ENCODE measurements at regions of chr1 and their contacts with region 1.

Region 1: GRCh38 chr1:200620273-200621131 is at the start of gene KIF14:
- DNase-seq: peak; percentile 85
- ATAC-seq: peak; percentile 97
- H3K4me3 ChIP-seq: peak within 1 kb of the TSS; percentile 94
- H3K27ac ChIP-seq: peak within 1 kb of the TSS; percentile 60
- H3K4me1 ChIP-seq: peaks cover 0 to 12% of the 10 kb centered on the region in 2 experiments; a peak in 3 of 4 replicates
- H3K27me3 ChIP-seq: no peaks in the 10 kb centered on the region
- CTCF ChIP-seq: no peak
- POLR2A ChIP-seq: peak; percentile 32
- RAD21 ChIP-seq: no peak
- total RNA-seq, gene KIF14: 21.8 TPM

Region 2: DNA sequence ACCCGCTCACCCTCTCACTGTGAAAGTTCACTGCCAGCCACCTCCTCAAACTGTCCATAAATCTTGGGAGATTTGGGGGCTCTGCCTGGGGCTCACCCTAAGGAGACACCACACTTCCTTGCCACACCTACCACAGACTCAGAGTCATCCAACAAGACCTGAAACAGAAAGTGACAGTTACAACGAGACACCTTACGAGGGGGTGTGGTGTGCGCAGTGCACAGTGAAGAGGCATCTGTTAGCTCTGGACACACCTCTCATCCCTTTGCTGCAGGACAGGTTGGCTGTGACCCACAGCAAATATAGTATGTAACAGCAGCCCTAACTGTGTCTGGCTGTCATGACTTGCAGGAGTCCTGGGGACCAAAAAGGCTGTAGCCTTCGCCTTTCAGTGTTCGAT is 402.8 kb before region 1 on chr1:
- CTCF ChIA-PET with region 1: no interaction called
- POLR2A ChIA-PET with region 1: no interaction called
- RAD21 ChIA-PET with region 1: no interaction called
- intact Hi-C with region 1: no loop called
- DNase-seq: no peak
- ATAC-seq: no peak
- H3K4me3 ChIP-seq: no peak overlapping the region
- H3K27ac ChIP-seq: no peak overlapping the region
- H3K4me1 ChIP-seq: no peaks in the 10 kb centered on the region
- H3K27me3 ChIP-seq: no peaks in the 10 kb centered on the region
- CTCF ChIP-seq: no peak
- POLR2A ChIP-seq: no peak
- RAD21 ChIP-seq: no peak

Region 3: DNA sequence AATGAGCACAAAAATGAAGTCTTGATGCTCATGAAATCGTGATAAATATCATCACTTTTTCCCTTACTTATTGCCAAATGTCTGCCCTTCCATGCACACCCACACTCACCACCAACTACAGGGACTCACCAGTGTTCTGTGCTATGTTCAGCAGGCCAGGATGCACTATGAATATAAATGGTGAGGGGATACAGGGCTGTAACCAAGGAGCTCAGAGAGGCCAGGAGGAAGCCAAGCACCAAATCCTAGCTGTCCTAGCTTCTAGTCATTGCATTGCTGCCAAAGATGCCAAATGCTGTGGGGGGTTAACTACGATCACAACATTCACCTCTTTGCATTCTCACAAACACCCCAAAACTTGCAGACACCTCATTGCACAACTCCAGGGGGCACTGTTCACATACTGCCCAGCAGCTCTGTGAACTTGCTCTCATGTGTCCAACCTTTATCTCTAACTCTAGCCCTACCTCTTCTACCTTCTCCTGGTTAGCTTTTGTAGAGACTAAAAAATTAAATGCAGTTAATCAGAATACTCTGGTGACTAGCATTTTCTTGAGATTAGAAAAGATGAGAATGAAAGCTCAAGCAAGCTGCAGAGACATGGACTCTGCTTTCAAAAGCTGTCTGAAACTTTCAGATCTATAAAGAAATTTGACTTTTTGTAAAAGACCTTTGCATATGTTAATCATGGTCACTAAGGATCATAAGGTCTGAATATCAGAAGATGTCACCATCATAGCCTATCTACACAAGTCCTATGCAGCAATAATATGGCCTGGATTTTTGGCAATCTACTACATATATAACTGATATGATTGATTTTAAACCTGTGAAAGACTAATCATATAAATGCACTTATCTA is 14.0 kb after region 1 on chr1:
- CTCF ChIA-PET with region 1: interaction called, 14 read pairs
- POLR2A ChIA-PET with region 1: no interaction called
- RAD21 ChIA-PET with region 1: interaction called in 1 of 2 experiments, 3 read pairs
- intact Hi-C with region 1: no loop called
- DNase-seq: no peak
- ATAC-seq: no peak; the same call in 1 of the 2 replicates
- H3K4me3 ChIP-seq: no peak overlapping the region
- H3K27ac ChIP-seq: no peak overlapping the region
- H3K4me1 ChIP-seq: peaks cover 4 to 22% of the 10 kb centered on the region in 2 experiments
- H3K27me3 ChIP-seq: no peaks in the 10 kb centered on the region
- CTCF ChIP-seq: peak; percentile 22 to 61 (median 57); a peak in 5 of 6 replicates
- POLR2A ChIP-seq: no peak
- RAD21 ChIP-seq: peak; percentile 43

Region 4: DNA sequence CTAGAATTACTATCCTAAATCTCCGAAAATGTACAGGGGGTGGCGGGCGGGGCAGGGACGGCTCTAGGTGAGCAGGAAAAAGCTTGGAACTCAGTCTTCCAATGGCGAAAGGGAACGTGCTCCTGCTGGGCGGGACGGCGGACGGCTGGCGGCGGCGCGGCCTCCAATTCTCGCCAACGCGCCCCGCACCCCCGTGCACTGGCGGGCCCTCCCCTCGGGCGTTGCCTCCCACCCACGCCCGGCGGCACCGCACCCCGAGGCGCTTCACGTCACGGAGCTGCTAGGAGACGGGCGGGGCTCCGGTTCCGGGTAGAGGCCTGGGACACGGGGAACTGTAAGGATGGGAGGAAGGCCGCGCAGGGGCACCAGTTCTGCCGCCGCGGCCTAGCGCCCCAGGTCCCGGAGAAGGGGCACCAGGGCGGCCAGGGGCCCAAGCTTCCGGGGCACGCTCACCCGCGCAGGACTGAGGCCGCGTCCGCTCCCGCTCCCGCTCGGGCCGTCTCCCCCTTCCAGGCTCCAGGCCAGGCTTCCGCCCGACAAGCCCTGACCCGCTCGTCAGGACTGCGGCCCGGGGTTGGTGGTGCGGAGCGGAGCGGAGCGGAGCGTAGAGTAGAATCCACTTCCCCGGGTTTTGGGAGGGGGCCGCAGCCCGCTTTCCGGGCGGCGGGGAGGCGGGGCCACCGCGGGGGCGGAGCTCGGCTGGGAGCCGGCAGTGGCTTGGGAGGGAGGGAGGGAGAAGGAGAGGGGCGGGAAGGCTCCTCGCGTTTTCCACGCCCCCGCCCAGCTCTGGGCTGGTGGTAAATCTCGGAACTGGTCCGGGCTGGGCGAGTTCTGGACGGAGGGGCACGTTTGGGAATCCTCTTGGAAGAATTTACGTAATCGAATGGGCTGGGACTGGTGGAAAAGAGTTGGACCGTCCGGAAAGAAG is 49.1 kb after region 1 on chr1 and contains the start of gene DDX59:
- CTCF ChIA-PET with region 1: interaction called, 19 read pairs
- POLR2A ChIA-PET with region 1: interaction called, 19 read pairs
- RAD21 ChIA-PET with region 1: interaction called, 4 to 8 read pairs
- intact Hi-C with region 1: loop called (anchors 1 kb)
- DNase-seq: peak; percentile 95
- ATAC-seq: peak; percentile 83
- H3K4me3 ChIP-seq: peak within 1 kb of the TSS; percentile 68 to 79
- H3K27ac ChIP-seq: peak within 1 kb of the TSS; percentile 100
- H3K4me1 ChIP-seq: peaks cover 10 to 23% of the 10 kb centered on the region in 2 experiments
- H3K27me3 ChIP-seq: no peaks in the 10 kb centered on the region
- CTCF ChIP-seq: no peak
- POLR2A ChIP-seq: peak; percentile 61
- RAD21 ChIP-seq: no peak
- total RNA-seq, gene DDX59: 16.0 TPM

Region 5: GRCh38 chr1:200738740-200739498 is 118.4 kb after region 1 on chr1 and contains the start of gene CAMSAP2:
- CTCF ChIA-PET with region 1: no interaction called
- POLR2A ChIA-PET with region 1: no interaction called
- RAD21 ChIA-PET with region 1: no interaction called
- intact Hi-C with region 1: loop called (anchors 5 kb)
- DNase-seq: peak; percentile 34
- ATAC-seq: peak; percentile 81
- H3K4me3 ChIP-seq: peak within 1 kb of the TSS; percentile 82 to 91
- H3K27ac ChIP-seq: peak within 1 kb of the TSS; percentile 96
- H3K4me1 ChIP-seq: peaks cover 12 to 28% of the 10 kb centered on the region in 2 experiments; a peak in 3 of 4 replicates
- H3K27me3 ChIP-seq: no peaks in the 10 kb centered on the region
- CTCF ChIP-seq: no peak
- POLR2A ChIP-seq: peak; percentile 53
- RAD21 ChIP-seq: no peak
- total RNA-seq, gene CAMSAP2: 25.0 TPM

Region 6: DNA sequence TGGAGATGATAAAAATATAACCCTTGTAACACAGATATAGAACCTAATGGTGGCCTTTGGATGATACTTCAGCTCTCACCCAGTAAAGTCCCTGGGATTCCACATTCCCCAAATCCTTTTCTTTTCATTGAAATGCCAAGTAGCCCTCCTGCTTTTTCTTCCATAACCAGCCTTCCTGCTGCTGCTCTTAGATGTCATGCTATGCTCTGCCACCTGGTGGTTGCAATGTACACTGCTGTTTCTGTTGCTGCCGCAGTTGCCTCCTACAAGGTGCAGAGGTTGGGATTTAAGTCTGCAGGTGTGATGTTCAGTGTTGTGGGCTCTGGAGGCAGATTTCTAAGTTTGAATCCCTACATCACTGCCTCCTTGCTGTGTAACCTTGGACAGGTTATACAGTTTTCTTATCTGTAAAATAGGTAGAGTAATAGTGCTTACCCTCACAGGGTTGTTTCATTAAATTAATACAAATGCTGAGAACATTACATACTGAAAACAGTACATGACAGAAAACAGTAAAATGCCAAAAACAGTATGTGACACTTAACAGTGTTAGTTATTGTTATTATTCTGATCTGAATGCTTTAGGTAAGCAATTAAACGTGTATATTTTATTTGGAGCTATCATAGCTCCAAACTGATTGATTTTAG is 182.5 kb after region 1 on chr1:
- CTCF ChIA-PET with region 1: interaction called, 33 read pairs
- POLR2A ChIA-PET with region 1: interaction called, 3 read pairs
- RAD21 ChIA-PET with region 1: interaction called in 1 of 2 experiments, 8 read pairs
- intact Hi-C with region 1: loop called (anchors 1 kb)
- DNase-seq: peak; percentile 80
- ATAC-seq: peak; percentile 99
- H3K4me3 ChIP-seq: no peak overlapping the region
- H3K27ac ChIP-seq: no peak overlapping the region
- H3K4me1 ChIP-seq: peaks cover 0 to 9% of the 10 kb centered on the region in 2 experiments; a peak in 2 of 4 replicates
- H3K27me3 ChIP-seq: no peaks in the 10 kb centered on the region
- CTCF ChIP-seq: peak; percentile 89 to 95 (median 94)
- POLR2A ChIP-seq: no peak
- RAD21 ChIP-seq: peak; percentile 94

Region 7: DNA sequence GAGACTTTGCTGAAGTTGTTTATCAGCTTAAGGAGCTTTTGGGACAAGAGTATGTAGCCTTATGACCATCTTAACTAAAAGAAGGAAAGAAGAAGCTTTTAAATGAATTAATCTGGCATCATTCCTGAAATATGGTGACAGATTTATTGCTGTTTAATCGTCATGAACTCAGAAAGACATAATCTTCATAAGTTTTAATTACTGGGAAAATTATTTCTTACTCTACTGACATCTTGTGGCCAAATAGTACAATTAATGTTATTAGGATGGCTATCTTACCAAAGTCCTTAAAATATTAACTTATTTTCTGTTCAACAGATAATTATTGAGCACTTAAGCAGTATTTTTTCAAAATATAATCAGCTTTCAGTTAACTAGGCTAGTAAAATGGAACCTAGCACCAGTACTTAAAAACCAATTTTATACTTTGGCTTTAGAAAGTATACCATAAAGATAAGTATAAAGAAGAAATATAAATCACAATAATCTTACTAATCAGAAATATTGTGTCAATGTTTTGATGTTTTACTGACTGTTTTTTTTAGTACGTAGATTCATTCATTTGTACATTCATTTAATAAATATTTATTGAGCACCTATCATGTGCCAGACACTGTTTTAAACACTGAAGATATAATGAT is 217.5 kb after region 1 on chr1:
- CTCF ChIA-PET with region 1: interaction called, 6 read pairs
- POLR2A ChIA-PET with region 1: no interaction called
- RAD21 ChIA-PET with region 1: interaction called in 1 of 2 experiments, 3 read pairs
- intact Hi-C with region 1: loop called (anchors 2 kb)
- DNase-seq: peak; percentile 24
- ATAC-seq: no peak
- H3K4me3 ChIP-seq: no peak overlapping the region
- H3K27ac ChIP-seq: no peak overlapping the region
- H3K4me1 ChIP-seq: no peaks in the 10 kb centered on the region
- H3K27me3 ChIP-seq: no peaks in the 10 kb centered on the region
- CTCF ChIP-seq: peak in 2 of 3 experiments; percentile 50 to 55; a peak in 4 of 6 replicates
- POLR2A ChIP-seq: no peak
- RAD21 ChIP-seq: peak; percentile 63

Region 8: GRCh38 chr1:201042779-201043461 is 422.4 kb after region 1 on chr1:
- CTCF ChIA-PET with region 1: interaction called, 9 read pairs
- POLR2A ChIA-PET with region 1: no interaction called
- RAD21 ChIA-PET with region 1: no interaction called
- intact Hi-C with region 1: loop called (anchors 2 kb)
- DNase-seq: peak; percentile 65
- ATAC-seq: peak; percentile 96
- H3K4me3 ChIP-seq: no peak overlapping the region
- H3K27ac ChIP-seq: no peak overlapping the region
- H3K4me1 ChIP-seq: peaks cover 0 to 3% of the 10 kb centered on the region in 2 experiments; a peak in 1 of 4 replicates
- H3K27me3 ChIP-seq: no peaks in the 10 kb centered on the region
- CTCF ChIP-seq: peak; percentile 84 to 96 (median 88)
- POLR2A ChIP-seq: no peak
- RAD21 ChIP-seq: peak; percentile 96

Measured in HCT116 (cell line).